Colonic mucosa (tissue), 4 donors: ENCODE measurements at regions of chr9 and their contacts with region 1.

Region 1: GRCh38 chr9:70413798-70414775 is at the start of gene KLF9:
- DNase-seq: peak; percentile 95
- H3K4me3 ChIP-seq: peak within 1 kb of the TSS; percentile 65
- H3K27ac ChIP-seq: peak within 1 kb of the TSS; percentile 99
- H3K4me1 ChIP-seq: peaks cover 9% of the 10 kb centered on the region
- H3K27me3 ChIP-seq: no peaks in the 10 kb centered on the region
- CTCF ChIP-seq: no peak
- total RNA-seq, gene KLF9: 13.5 to 18.8 TPM

Region 2: GRCh38 chr9:70258692-70259511 is 155.2 kb before region 1 on chr9 and contains the start of gene SMC5:
- intact Hi-C with region 1: loop called (anchors 5 kb)
- DNase-seq: peak; percentile 89
- H3K4me3 ChIP-seq: peak within 1 kb of the TSS; percentile 69
- H3K27ac ChIP-seq: peak within 1 kb of the TSS; percentile 97
- H3K4me1 ChIP-seq: peaks cover 7% of the 10 kb centered on the region
- H3K27me3 ChIP-seq: no peaks in the 10 kb centered on the region
- CTCF ChIP-seq: no peak
- total RNA-seq, gene SMC5: 31.4 to 35.9 TPM